WTC11 (cell line): ENCODE measurements at regions of chr5 and their contacts with region 1.

Region 1: GRCh38 chr5:150350524-150351344 is 6.8 kb upstream of the TCOF1 start:
- DNase-seq: peak; percentile 88
- ATAC-seq: peak; percentile 92
- H3K4me3 Mint-ChIP-seq: no peak overlapping the region
- H3K27ac Mint-ChIP-seq: peak overlapping the region; percentile 67
- H3K4me1 Mint-ChIP-seq: peaks cover 13% of the 10 kb centered on the region
- H3K27me3 Mint-ChIP-seq: peaks cover 2% of the 10 kb centered on the region; the same call in 1 of the 2 replicates
- CTCF ChIP-seq: peak; percentile 65

Region 2: GRCh38 chr5:150149618-150150017 is 201.1 kb before region 1 on chr5:
- CTCF ChIA-PET with region 1: no interaction called
- POLR2A ChIA-PET with region 1: no interaction called
- DNase-seq: no peak
- ATAC-seq: no peak
- H3K4me3 Mint-ChIP-seq: no peak overlapping the region
- H3K27ac Mint-ChIP-seq: no peak overlapping the region
- H3K4me1 Mint-ChIP-seq: peaks cover 20% of the 10 kb centered on the region
- H3K27me3 Mint-ChIP-seq: no peaks in the 10 kb centered on the region
- CTCF ChIP-seq: no peak

Region 3: DNA sequence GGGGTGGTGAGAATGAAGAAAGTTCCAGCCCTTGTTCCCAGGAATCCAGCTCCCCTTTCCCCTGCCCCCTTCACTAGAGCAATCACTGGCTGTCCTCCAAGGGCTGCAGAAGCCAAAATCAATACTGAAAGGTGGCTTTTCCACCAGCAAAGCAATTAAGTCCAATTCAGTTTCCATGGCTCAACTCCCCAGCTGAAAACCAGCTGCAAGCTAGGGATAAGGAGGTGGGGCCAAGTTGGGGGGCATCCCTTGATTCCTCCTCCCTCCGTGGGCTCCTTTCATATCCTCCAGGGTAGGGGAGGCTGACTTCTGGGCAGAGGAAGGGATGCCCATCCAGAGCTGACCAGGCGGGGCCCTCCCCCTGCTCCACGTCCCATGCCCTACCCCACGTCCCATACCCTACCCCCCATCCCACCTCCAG is 83.9 kb before region 1 on chr5:
- CTCF ChIA-PET with region 1: interaction called, 71 read pairs
- POLR2A ChIA-PET with region 1: no interaction called
- DNase-seq: no peak
- ATAC-seq: no peak
- H3K4me3 Mint-ChIP-seq: no peak overlapping the region
- H3K27ac Mint-ChIP-seq: no peak overlapping the region
- H3K4me1 Mint-ChIP-seq: peaks cover 17% of the 10 kb centered on the region
- H3K27me3 Mint-ChIP-seq: no peaks in the 10 kb centered on the region
- CTCF ChIP-seq: no peak

Region 4: GRCh38 chr5:150272526-150272925 is 78.2 kb before region 1 on chr5:
- CTCF ChIA-PET with region 1: interaction called, 71 read pairs
- POLR2A ChIA-PET with region 1: interaction called, 4 read pairs
- DNase-seq: peak; percentile 56
- ATAC-seq: peak; percentile 93
- H3K4me3 Mint-ChIP-seq: no peak overlapping the region
- H3K27ac Mint-ChIP-seq: no peak overlapping the region
- H3K4me1 Mint-ChIP-seq: peaks cover 10% of the 10 kb centered on the region
- H3K27me3 Mint-ChIP-seq: no peaks in the 10 kb centered on the region
- CTCF ChIP-seq: no peak

Region 5: DNA sequence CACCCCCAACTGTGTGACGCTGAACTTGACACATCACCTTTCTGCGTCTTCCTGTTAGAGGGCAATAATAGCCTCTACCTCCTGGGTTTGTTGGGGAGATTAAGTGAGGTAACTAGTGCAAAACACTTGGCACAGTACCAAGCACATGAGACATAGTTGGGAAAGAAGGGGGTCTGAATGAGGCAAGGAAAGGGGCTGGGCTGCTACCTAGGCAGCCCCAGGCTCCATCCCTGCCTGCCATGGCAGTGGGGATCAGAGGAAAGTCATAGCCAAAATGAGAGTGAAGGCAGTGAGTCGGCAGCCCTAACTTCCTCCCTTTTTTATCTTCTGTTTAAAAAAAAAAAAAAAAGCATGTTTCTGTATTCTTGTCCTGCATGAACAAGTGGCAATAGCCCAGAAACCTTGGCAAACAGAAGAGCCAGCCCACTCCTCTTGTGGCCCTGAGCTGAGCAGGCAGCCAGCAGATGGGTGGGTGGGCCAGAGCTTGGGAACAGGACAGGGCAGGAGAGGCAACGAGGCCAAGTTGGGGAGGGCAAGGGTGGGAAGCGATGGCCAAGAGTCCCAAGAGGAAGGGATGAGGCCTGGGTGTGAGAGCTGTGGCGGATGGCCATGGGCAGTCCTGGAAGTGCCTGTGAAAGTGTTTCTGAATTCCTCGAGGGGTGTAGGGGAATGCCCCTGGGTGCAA is 72.5 kb before region 1 on chr5:
- CTCF ChIA-PET with region 1: interaction called, 71 read pairs
- POLR2A ChIA-PET with region 1: no interaction called
- DNase-seq: no peak
- ATAC-seq: no peak
- H3K4me3 Mint-ChIP-seq: no peak overlapping the region
- H3K27ac Mint-ChIP-seq: no peak overlapping the region
- H3K4me1 Mint-ChIP-seq: no peaks in the 10 kb centered on the region
- H3K27me3 Mint-ChIP-seq: no peaks in the 10 kb centered on the region
- CTCF ChIP-seq: no peak

Region 6: DNA sequence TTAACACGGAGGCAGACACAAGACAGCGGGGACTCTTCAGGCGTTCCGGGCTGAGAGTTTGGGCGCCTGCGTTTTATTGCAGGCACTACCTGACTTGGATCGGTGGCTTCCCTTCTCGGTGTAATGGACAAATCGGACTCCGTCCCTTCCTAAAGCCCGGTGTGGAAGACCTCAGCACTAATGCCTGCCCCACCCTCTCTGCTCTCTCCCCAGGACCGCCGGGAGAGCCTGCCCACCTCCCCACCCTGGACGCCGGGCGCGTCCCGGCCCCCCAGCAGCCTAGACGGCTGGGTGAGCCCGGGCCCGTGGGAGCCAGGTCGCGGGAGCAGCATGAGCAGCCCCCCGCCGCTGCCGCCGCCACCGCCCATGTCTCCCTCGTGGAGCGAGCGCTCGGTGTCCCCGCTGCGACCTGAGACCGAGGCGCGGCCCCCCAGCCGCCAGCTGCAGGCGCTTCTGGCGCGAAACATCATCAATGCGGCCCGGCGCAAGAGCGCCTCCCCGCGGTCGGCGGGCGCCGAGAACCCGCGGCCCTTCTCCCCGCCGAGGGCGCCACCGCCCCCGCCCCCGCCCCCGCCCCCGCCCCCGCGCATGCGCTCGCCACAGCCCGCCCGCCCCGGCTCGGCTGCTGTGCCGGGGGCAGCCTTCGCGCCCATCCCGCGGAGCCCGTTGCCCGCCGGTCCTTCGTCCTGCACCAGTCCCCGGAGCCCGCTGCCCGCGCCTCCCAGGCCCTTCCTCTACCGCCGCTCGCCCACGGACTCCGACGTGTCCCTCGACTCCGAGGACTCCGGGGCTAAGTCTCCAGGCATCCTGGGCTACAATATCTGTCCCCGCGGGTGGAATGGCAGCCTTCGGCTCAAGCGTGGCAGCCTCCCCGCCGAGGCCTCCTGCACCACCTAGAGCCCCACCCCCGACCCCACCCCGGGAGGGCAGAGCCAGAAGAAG is 305.7 kb after region 1 on chr5:
- CTCF ChIA-PET with region 1: no interaction called
- POLR2A ChIA-PET with region 1: no interaction called
- DNase-seq: peak; percentile 82
- ATAC-seq: peak; percentile 64
- H3K4me3 Mint-ChIP-seq: peak overlapping the region; percentile 73
- H3K27ac Mint-ChIP-seq: peak overlapping the region; percentile 76; the same call in 1 of the 2 replicates
- H3K4me1 Mint-ChIP-seq: peaks cover 27% of the 10 kb centered on the region
- H3K27me3 Mint-ChIP-seq: peaks cover 12% of the 10 kb centered on the region
- CTCF ChIP-seq: peak; percentile 55; the same call in 1 of the 2 replicates